Aorta (tissue), 5 donors: ENCODE measurements at regions of chr3 and their contacts with region 1.

Region 1: GRCh38 chr3:90091204-90091924 is 983.9 kb downstream of the EPHA3 start:
- DNase-seq: no peak
- ATAC-seq: no peak
- H3K4me3 ChIP-seq: no peak overlapping the region
- H3K27ac ChIP-seq: no peak overlapping the region
- H3K4me1 ChIP-seq: no peaks in the 10 kb centered on the region
- H3K27me3 ChIP-seq: no peaks in the 10 kb centered on the region

Region 2: DNA sequence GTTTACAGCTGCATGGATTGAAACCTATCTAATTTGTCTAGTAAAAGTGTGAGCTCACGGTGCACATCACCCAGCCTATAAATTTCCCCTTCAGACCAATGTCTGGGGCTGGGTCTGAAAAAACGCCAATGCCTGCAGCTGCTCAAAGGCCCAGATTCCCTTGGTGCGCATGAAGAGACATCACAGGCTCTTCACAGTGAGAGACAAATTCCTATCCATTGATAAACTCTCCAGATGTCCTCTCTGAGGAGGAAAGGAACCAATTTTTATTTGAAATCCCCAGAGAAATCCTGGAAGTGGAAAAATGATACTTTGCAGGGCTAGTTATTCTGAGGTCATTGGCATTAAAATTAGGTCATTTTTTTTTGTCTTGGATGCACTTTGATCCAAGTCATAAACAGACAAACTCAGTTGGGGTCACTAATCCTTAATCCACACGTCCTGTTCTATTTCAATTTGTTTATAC is 623.4 kb before region 1 on chr3:
- intact Hi-C with region 1: no loop called
- DNase-seq: no peak
- ATAC-seq: no peak
- H3K4me3 ChIP-seq: no peak overlapping the region
- H3K27ac ChIP-seq: no peak overlapping the region
- H3K4me1 ChIP-seq: no peaks in the 10 kb centered on the region
- H3K27me3 ChIP-seq: no peaks in the 10 kb centered on the region

Region 3: DNA sequence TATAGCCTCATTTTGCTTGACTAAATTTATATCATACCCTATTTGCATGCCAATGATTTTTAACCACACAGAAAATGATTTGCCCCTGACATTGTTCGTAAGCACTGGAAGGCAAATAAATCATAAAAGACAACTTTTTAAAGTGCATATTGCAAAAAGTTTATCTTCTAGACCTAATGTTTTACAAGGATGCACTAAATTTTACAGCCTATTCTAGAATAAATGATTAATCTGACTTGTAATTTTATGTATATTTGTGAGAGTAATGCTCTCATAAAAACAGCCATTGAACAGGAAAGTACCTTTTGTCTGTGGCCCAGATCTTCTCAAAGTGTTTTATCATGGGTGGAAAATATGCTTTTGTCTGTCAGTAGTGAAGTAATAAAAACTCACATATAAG is 437.3 kb before region 1 on chr3:
- intact Hi-C with region 1: no loop called
- DNase-seq: no peak
- ATAC-seq: no peak
- H3K4me3 ChIP-seq: no peak overlapping the region
- H3K27ac ChIP-seq: no peak overlapping the region
- H3K4me1 ChIP-seq: no peaks in the 10 kb centered on the region
- H3K27me3 ChIP-seq: no peaks in the 10 kb centered on the region

Region 4: DNA sequence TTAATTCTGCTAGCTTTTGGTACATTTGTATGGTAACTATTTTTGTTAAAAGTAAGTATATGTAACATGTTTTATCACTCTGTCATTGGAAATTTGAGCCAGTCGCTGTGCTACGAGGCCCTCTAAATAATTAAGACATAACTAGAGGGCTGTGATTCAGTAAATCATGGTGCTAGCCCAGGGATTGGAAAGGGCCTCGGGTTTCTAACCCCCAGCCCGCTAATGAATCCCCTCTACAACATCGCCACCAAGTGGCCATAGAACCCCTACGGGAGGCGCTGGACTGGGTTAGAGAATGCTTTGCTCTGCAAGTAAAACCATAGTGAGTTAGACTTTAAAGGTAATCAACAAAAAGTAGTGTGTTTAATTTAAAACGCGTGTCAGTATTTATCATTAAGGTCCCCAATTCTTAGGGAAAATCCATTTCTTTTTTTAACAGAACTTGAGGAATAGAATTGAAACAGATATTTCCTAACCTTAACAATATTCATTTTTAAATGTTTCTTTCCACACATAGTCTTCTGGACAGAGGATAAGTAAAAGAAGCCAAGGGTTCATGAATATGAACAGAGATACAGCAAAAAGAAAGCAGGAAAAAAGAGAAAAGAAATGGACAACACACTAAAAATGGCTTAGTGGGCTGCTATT is 239.3 kb before region 1 on chr3:
- intact Hi-C with region 1: loop called in 1 of 2 experiments (anchors 10 kb)
- DNase-seq: peak in 1 of 2 donors; percentile 66
- ATAC-seq: no peak
- H3K4me3 ChIP-seq: no peak overlapping the region
- H3K27ac ChIP-seq: no peak overlapping the region
- H3K4me1 ChIP-seq: no peaks in the 10 kb centered on the region
- H3K27me3 ChIP-seq: no peaks in the 10 kb centered on the region

Region 5: DNA sequence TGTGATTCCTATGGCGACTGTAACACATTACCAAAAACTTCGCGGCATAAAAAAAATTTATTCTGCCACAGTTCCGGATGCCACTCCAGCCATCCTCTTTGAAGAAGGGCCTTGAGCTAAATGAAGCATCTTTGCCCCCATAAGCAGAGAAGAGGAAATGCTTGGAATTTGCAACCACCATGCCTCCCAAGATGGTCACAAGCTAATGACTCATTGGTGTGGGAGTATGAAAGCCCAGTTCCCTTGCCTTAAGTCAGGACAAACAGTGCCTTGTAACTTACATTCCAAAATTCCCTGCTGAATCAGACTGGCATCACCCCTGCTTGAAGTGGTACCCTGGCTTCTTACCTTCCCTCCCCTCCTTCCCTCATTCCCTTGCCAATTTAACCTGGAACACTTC is 93.5 kb after region 1 on chr3:
- intact Hi-C with region 1: no loop called
- DNase-seq: no peak
- ATAC-seq: no peak
- H3K4me3 ChIP-seq: no peak overlapping the region
- H3K27ac ChIP-seq: no peak overlapping the region
- H3K4me1 ChIP-seq: no peaks in the 10 kb centered on the region
- H3K27me3 ChIP-seq: no peaks in the 10 kb centered on the region

Region 6: GRCh38 chr3:90241481-90241880 is 150.1 kb after region 1 on chr3:
- intact Hi-C with region 1: no loop called
- DNase-seq: no peak
- ATAC-seq: peak; percentile 71
- H3K4me3 ChIP-seq: no peak overlapping the region
- H3K27ac ChIP-seq: no peak overlapping the region
- H3K4me1 ChIP-seq: no peaks in the 10 kb centered on the region
- H3K27me3 ChIP-seq: no peaks in the 10 kb centered on the region